Posterior cingulate gyrus (tissue), 11 donors: ENCODE measurements at regions of chr5 and their contacts with region 1.

Region 1: GRCh38 chr5:131634996-131635754 is at the start of gene RAPGEF6:
- DNase-seq: peak; percentile 92 to 99 (median 96)

Region 2: GRCh38 chr5:131589510-131590348 is 45.4 kb before region 1 on chr5:
- intact Hi-C with region 1: loop called (anchors 5 kb)
- DNase-seq: peak in 4 of 10 donors; percentile 4 to 77 (median 30)

Region 3: GRCh38 chr5:131706281-131706680 is 71.1 kb after region 1 on chr5:
- intact Hi-C with region 1: loop called (anchors 10 kb)
- DNase-seq: peak in 1 of 10 donors; percentile 50

Region 4: DNA sequence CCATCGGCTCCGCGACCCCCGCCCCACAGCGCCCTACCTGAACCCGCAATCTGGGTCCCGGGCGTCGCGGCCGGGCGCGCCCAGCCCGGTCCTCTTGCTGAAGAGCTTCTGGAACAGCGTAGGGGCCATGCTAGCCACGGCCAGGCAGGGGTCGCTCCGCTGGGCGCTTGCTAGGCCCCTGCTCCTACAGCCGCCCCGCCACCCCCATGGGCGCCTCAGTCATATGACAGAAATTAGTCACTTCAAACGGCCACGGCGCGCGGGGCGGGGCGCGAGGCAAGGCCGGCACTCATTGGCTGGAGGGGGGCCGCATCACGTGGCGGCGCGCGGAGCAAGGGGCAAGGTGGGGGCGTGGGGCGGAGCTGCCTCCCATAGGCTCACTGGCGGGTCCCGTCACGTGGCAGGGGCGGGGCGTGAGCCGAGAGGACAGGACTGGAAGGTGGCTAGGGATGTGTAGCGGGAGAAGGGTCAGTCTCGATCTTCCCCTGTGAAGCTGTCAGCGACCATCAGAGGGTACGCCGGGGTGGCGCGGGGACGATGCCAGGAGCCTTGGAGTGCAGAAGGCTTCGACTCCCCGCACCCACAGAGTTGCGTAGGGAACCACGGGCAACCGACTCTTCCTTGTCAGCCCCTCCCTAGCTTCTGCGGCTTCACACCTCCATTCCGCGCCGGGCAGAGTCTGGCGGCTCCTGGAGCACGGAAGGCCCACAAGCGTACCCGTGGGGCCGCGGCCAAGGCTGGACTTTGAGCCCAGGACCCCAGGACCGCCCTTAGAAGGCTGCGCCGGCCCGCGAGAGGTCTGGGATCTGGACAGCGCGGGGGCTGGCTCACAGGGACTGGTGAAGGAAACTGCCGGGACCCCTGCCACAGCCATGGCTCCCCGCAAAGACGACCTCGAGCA is 161.9 kb after region 1 on chr5 and contains the start of gene FNIP1:
- intact Hi-C with region 1: loop called (anchors 2 kb)
- DNase-seq: peak; percentile 99 to 100 (median 100)